ENCODE measurements at regions of chr9 and their contacts with region 1.

Region 1: GRCh38 chr9:122264360-122265148 is at the starts of genes MRRF and RBM18:
- DNase-seq: peak; percentile 80 to 93 (median 88)
- ATAC-seq: peak; percentile 92
- H3K4me3 ChIP-seq: peak within 1 kb of the TSS; percentile 93
- H3K4me3 Mint-ChIP-seq: peak within 1 kb of the TSS; percentile 88 to 100 (median 98)
- H3K27ac ChIP-seq: peak within 1 kb of the TSS; percentile 94
- H3K27ac Mint-ChIP-seq: peak within 1 kb of the TSS; percentile 76 to 100 (median 99)
- H3K4me1 ChIP-seq: peaks cover 18 to 25% of the 10 kb centered on the region in 2 donors
- H3K4me1 Mint-ChIP-seq: peaks cover 40 to 71% (median 61%) of the 10 kb centered on the region in 7 donors
- H3K27me3 ChIP-seq: no peaks in the 10 kb centered on the region
- H3K27me3 Mint-ChIP-seq: peaks cover 0 to 2% (median 0%) of the 10 kb centered on the region in 5 donors
- total RNA-seq, gene MRRF: 28.1 to 35.8 (median 33.3) TPM
- total RNA-seq, gene RBM18: 14.2 to 22.9 (median 15.8) TPM

Region 2: DNA sequence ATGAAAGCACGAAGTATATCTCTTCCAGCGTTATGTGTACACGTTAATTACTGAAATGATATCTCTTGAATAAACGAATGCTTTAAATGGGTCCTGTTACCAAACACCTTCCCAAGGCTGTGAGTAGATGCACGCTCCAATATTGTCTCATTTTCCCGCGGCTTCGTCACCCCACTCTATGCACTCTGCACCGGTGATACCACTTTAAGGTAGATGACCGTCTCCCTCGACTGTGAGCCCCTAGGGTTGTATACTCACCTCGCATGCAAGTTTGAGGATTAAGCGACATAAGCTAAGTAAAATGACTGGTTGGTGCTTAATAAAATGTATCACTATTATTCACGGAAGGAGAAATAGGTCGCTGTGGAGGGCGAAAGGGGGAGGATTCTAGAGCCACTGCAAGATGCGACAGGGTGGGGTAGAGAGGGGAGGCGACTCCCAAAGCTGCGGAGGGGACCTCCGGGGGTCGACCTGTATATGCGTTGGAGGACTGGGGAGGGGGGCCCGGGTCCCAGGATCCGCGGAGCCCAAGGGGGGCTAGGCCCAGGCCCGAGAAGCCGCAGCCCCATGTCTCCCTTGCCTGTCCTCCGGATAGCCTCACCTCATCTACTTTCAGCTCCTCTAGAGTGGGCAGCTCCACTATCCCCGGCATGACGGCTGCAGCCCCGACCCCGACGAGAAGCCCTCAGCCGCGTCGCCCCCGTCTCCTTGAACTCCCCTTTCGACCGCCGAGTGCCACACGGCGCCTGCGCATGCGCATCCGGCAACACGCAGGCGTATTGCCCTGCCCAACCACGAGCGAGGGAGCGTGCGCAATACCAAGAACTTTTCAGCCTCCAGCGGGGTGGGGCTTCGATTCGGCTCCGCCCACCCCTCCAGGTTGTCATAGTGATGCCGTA is 105.3 kb before region 1 on chr9 and contains the starts of genes MORN5 and NDUFA8:
- CTCF ChIA-PET with region 1: no interaction called
- POLR2A ChIA-PET with region 1: interaction called, 5 read pairs
- intact Hi-C with region 1: loop called (anchors 1 kb)
- DNase-seq: peak; percentile 94 to 97 (median 96)
- ATAC-seq: peak; percentile 98
- H3K4me3 ChIP-seq: peak within 1 kb of the TSS; percentile 74
- H3K4me3 Mint-ChIP-seq: peak within 1 kb of the TSS; percentile 94 to 100 (median 99)
- H3K27ac ChIP-seq: peak within 1 kb of the TSS; percentile 88
- H3K27ac Mint-ChIP-seq: peak within 1 kb of the TSS; percentile 90 to 99 (median 96)
- H3K4me1 ChIP-seq: peaks cover 7% of the 10 kb centered on the region in 2 donors
- H3K4me1 Mint-ChIP-seq: peaks cover 23 to 51% (median 47%) of the 10 kb centered on the region in 7 donors
- H3K27me3 ChIP-seq: no peaks in the 10 kb centered on the region
- H3K27me3 Mint-ChIP-seq: peaks cover 8 to 25% (median 20%) of the 10 kb centered on the region in 5 donors
- total RNA-seq, gene MORN5: not detected
- total RNA-seq, gene NDUFA8: 6.7 to 35.0 (median 15.6) TPM